Dendritic cell treated with granulocyte-macrophage colony-stimulating factor and Interleukin-4, amounts not matched to agents 40 ng/mL and 50 ng/mL, for 4 days (primary cell): ENCODE measurements at regions of chr1 and their contacts with region 1.

Region 1: GRCh38 chr1:165914136-165914798 is 86.9 kb downstream of the UCK2 start:
- H3K4me3 Mint-ChIP-seq: no peak overlapping the region
- H3K27ac Mint-ChIP-seq: no peak overlapping the region
- H3K4me1 Mint-ChIP-seq: peaks cover 5% of the 10 kb centered on the region
- H3K27me3 Mint-ChIP-seq: no peaks in the 10 kb centered on the region

Region 2: GRCh38 chr1:165392634-165393571 is 521.4 kb before region 1 on chr1:
- intact Hi-C with region 1: loop called (anchors 5 kb)
- H3K4me3 Mint-ChIP-seq: peak overlapping the region; percentile 48
- H3K27ac Mint-ChIP-seq: peak overlapping the region; percentile 45
- H3K4me1 Mint-ChIP-seq: peaks cover 27% of the 10 kb centered on the region
- H3K27me3 Mint-ChIP-seq: peaks cover 93% of the 10 kb centered on the region

Region 3: GRCh38 chr1:165717918-165718515 is 196.2 kb before region 1 on chr1:
- intact Hi-C with region 1: loop called (anchors 1 kb)
- H3K4me3 Mint-ChIP-seq: no peak overlapping the region
- H3K27ac Mint-ChIP-seq: no peak overlapping the region
- H3K4me1 Mint-ChIP-seq: no peaks in the 10 kb centered on the region
- H3K27me3 Mint-ChIP-seq: peaks cover 3% of the 10 kb centered on the region

Region 4: GRCh38 chr1:165827268-165828102 is 86.8 kb before region 1 on chr1 and contains the start of gene UCK2:
- intact Hi-C with region 1: loop called (anchors 1 kb)
- H3K4me3 Mint-ChIP-seq: peak within 1 kb of the TSS; percentile 99
- H3K27ac Mint-ChIP-seq: peak within 1 kb of the TSS; percentile 87
- H3K4me1 Mint-ChIP-seq: peaks cover 15% of the 10 kb centered on the region
- H3K27me3 Mint-ChIP-seq: no peaks in the 10 kb centered on the region